ENCODE measurements at regions of chr2 and their contacts with region 1.

Region 1: DNA sequence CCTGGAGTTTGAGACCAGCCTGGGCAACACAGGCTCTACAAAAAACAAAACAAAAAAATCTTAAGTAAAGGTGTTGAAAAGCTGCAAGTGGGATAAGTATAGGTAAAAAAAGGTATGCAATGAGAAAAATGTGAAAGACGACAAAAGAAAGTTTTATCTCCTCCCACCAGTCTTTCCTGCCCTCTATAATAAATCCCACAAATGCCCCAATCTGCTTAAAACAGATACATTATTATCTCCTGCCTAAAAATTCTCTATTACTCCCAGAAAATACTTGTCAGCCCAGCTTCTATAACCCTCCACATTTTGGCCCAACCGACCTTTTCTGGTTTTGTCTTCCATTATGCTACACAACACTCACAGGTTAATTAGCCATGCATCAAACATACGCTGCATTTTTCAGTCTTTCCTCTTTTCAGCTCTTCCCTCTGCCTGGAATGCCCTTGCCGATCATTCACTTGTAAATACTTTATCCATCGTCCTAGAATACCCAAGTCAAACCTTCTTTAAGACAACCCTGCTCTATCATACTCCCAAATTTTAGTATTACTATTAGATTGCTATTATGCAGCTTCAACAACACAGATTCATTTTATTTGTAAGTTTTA is 10.8 kb downstream of the ASXL2 start:
- DNase-seq: no peak
- ATAC-seq: no peak
- H3K4me3 ChIP-seq: no peak overlapping the region
- H3K27ac ChIP-seq: no peak overlapping the region
- H3K4me1 ChIP-seq: no peaks in the 10 kb centered on the region
- H3K27me3 ChIP-seq: no peaks in the 10 kb centered on the region
- CTCF ChIP-seq: no peak
- POLR2A ChIP-seq: no peak
- RAD21 ChIP-seq: no peak

Region 2: DNA sequence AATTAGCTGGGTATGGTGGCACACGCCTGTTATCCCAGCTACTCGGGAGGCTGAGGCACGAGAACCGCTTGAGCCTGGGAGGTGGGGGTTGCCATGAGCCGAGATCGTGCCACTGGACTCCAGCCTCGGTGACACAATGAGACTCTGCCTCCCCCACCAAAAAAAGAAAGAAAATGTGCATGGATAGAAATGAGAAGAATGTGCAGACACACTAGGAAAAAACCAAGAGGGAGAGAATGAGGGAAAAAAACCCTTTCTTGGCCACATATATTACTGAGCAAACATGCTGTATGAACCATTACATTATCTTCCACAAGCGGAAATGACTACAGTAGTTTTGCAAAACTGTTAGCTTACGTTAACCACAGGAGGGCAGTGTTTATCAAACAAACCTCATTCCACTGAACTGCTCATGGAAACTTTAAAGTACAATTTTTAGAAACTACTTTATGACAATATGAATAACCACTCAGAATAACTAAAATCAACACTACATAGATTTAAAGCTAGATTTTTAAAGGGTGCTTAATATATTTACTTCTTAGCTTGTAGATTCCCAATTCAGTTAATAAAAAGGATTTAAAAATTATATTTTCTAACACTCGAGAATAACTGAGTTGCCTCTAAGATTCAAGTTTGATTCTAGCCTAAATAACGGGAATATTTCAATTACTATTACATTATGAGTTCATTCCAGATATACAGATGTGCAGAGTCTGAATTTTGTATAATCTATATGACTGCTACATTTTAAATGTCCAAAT is 15.6 kb before region 1 on chr2:
- CTCF ChIA-PET with region 1: interaction called, 10 read pairs
- POLR2A ChIA-PET with region 1: no interaction called
- RAD21 ChIA-PET with region 1: no interaction called
- intact Hi-C with region 1: no loop called
- DNase-seq: peak; percentile 41
- ATAC-seq: peak; percentile 87
- H3K4me3 ChIP-seq: no peak overlapping the region
- H3K27ac ChIP-seq: no peak overlapping the region
- H3K4me1 ChIP-seq: peaks cover 0 to 9% of the 10 kb centered on the region in 2 experiments; a peak in 3 of 4 replicates
- H3K27me3 ChIP-seq: no peaks in the 10 kb centered on the region
- CTCF ChIP-seq: peak; percentile 62 to 75 (median 68); a peak in 5 of 6 replicates
- POLR2A ChIP-seq: no peak
- RAD21 ChIP-seq: peak; percentile 74